ENCODE measurements at regions of chr13 and their contacts with region 1.

Region 1: DNA sequence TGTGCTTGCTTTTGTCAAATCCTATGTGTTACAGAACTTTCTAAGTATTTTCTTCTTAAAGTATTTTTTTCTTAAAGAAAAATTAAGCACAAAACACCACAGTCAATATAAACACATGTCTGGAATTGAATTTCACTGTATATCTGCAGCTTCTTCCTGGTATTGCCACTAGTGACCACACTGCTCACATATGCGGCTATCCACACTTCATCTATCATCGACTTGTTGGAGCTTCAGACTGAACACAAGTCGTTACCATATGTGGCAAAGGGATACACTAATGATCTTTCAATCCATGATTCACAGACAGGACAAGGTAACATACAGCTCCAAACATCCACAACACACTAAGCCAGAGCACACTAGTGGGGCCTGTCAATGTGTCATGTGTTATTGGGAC is 498.4 kb upstream of the ARGLU1 start:
- DNase-seq: no peak
- ATAC-seq: no peak
- H3K4me3 ChIP-seq: no peak overlapping the region
- H3K4me3 Mint-ChIP-seq: no peak overlapping the region
- H3K27ac ChIP-seq: no peak overlapping the region
- H3K27ac Mint-ChIP-seq: no peak overlapping the region
- H3K4me1 ChIP-seq: no peaks in the 10 kb centered on the region
- H3K4me1 Mint-ChIP-seq: no peaks in the 10 kb centered on the region
- H3K27me3 ChIP-seq: no peaks in the 10 kb centered on the region
- H3K27me3 Mint-ChIP-seq: no peaks in the 10 kb centered on the region
- CTCF ChIP-seq: no peak

Region 2: GRCh38 chr13:107091428-107091827 is 25.1 kb after region 1 on chr13:
- CTCF ChIA-PET with region 1: no interaction called
- POLR2A ChIA-PET with region 1: no interaction called
- intact Hi-C with region 1: loop called in 1 of 2 experiments (anchors 1 kb)
- DNase-seq: no peak
- ATAC-seq: no peak
- H3K4me3 ChIP-seq: no peak overlapping the region
- H3K4me3 Mint-ChIP-seq: no peak overlapping the region
- H3K27ac ChIP-seq: no peak overlapping the region
- H3K27ac Mint-ChIP-seq: no peak overlapping the region
- H3K4me1 ChIP-seq: no peaks in the 10 kb centered on the region
- H3K4me1 Mint-ChIP-seq: no peaks in the 10 kb centered on the region
- H3K27me3 ChIP-seq: no peaks in the 10 kb centered on the region
- H3K27me3 Mint-ChIP-seq: no peaks in the 10 kb centered on the region
- CTCF ChIP-seq: no peak